ENCODE measurements at regions of chr20 and their contacts with region 1.

Region 1: DNA sequence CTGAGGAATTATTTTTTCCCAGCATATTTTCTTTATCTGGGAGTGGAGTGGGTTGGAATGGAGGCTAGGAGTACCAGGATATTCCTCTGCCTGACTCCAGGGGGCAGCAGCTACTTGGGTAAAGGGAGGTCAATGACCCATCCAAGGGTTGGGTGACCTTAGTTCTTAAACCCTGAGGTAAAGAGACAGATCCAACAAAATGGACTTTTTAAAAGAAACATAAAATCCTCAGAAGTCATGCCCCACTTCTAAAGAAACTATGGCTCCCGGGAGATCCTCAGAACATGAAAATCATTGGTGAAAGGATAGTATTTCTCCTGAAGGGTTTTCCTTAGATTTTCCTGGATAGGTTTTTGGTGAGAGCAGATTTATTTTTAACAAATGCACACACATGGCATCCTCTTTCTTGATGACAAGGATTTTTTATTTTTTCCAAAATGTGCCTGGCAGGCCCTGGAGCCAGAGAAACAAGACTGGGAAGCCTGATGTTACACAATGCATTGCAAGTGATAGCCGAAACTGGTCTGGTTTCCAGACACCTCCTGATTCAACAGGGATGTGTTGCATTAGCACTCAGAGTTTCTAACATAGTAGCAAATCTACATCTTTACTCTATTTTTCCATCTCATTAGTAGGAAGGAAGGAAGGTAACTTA is 240.9 kb upstream of the BTBD3 start:
- DNase-seq: peak; percentile 52
- ATAC-seq: no peak
- H3K4me3 Mint-ChIP-seq: no peak overlapping the region
- H3K27ac Mint-ChIP-seq: no peak overlapping the region
- H3K4me1 Mint-ChIP-seq: no peaks in the 10 kb centered on the region
- H3K27me3 Mint-ChIP-seq: no peaks in the 10 kb centered on the region

Region 2: DNA sequence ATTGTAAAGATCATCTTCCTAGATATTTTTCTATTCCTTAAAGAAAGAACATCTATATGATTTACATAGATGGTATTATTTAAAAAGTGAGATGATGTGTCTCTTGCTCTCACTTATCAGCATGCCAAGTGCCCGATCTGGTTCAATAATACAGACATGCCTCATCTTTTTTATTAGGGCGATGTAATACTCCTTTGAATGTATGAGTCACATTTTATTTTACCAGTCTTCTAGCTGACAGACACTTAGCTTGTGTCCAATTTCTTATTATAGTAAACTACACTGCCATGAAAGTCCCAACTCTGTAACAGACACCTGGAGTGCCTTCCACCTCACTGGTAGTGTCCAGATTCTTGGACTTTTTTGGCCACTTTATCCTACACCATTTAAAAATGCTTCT is 345.7 kb before region 1 on chr20:
- CTCF ChIA-PET with region 1: no interaction called
- POLR2A ChIA-PET with region 1: no interaction called
- intact Hi-C with region 1: no loop called
- DNase-seq: no peak
- ATAC-seq: no peak
- H3K4me3 Mint-ChIP-seq: no peak overlapping the region
- H3K27ac Mint-ChIP-seq: no peak overlapping the region
- H3K4me1 Mint-ChIP-seq: no peaks in the 10 kb centered on the region
- H3K27me3 Mint-ChIP-seq: no peaks in the 10 kb centered on the region

Region 3: GRCh38 chr20:11451793-11452291 is 224.9 kb before region 1 on chr20:
- CTCF ChIA-PET with region 1: no interaction called
- POLR2A ChIA-PET with region 1: no interaction called
- intact Hi-C with region 1: no loop called
- DNase-seq: no peak
- ATAC-seq: no peak
- H3K4me3 Mint-ChIP-seq: no peak overlapping the region
- H3K27ac Mint-ChIP-seq: no peak overlapping the region
- H3K4me1 Mint-ChIP-seq: no peaks in the 10 kb centered on the region
- H3K27me3 Mint-ChIP-seq: no peaks in the 10 kb centered on the region

Region 4: GRCh38 chr20:11544029-11544678 is 132.6 kb before region 1 on chr20:
- CTCF ChIA-PET with region 1: no interaction called
- POLR2A ChIA-PET with region 1: no interaction called
- intact Hi-C with region 1: no loop called
- DNase-seq: peak; percentile 25
- ATAC-seq: no peak
- H3K4me3 Mint-ChIP-seq: no peak overlapping the region
- H3K27ac Mint-ChIP-seq: no peak overlapping the region
- H3K4me1 Mint-ChIP-seq: no peaks in the 10 kb centered on the region
- H3K27me3 Mint-ChIP-seq: no peaks in the 10 kb centered on the region

Region 5: GRCh38 chr20:12207875-12208274 is 531.1 kb after region 1 on chr20:
- CTCF ChIA-PET with region 1: no interaction called
- POLR2A ChIA-PET with region 1: no interaction called
- intact Hi-C with region 1: loop called in 1 of 2 experiments (anchors 5 kb)
- DNase-seq: peak; percentile 7
- ATAC-seq: no peak
- H3K4me3 Mint-ChIP-seq: no peak overlapping the region
- H3K27ac Mint-ChIP-seq: no peak overlapping the region
- H3K4me1 Mint-ChIP-seq: no peaks in the 10 kb centered on the region
- H3K27me3 Mint-ChIP-seq: no peaks in the 10 kb centered on the region